H1 (cell line): ENCODE measurements at regions of chr6 and their contacts with region 1.

Region 1: GRCh38 chr6:37137201-37138090 is 32.5 kb upstream of the PIM1 start:
- DNase-seq: peak; percentile 77 to 93
- H3K4me3 ChIP-seq: peak overlapping the region; percentile 49 to 90 (median 87)
- H3K27ac ChIP-seq: peak overlapping the region; percentile 98
- H3K4me1 ChIP-seq: peaks cover 15 to 37% (median 28%) of the 10 kb centered on the region in 4 experiments
- H3K27me3 ChIP-seq: no peaks in the 10 kb centered on the region
- CTCF ChIP-seq: no peak
- EP300 ChIP-seq: peak; percentile 29 to 86; a peak in 2 of 3 replicates
- POLR2A ChIP-seq: peak in 1 of 2 experiments; percentile 95; a peak in 2 of 3 replicates
- RAD21 ChIP-seq: peak; percentile 18 to 28; a peak in 2 of 4 replicates

Region 2: DNA sequence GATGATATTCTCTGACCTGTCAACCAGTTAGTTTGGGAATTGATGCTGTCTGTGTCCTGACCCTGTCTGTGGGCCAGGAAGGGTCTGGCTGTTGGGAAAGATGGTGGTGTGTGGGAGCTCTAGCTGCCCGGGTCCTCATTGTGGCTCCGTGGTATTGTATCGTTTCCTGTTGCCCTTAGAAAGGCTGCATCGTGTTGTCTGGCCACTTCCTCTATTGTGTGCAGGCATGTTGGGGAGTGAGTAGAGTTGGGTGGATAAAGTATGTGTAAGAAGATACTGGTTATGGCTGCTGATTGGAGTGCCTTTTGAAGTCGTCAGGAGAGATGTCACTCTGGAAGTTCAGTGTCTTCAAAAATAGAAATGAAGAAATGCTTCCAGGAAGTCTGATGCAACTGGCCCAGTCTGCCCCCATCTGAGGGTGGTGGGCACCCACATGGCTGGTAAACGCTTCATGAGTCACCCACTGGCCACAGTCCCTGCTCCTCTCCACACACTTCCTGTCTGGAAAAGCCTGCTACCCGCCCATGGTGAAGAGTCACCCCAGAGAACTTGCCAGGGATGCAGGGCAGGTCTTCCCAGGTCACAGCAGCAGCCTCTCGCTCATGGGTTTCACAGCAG is 1767.2 kb before region 1 on chr6:
- CTCF ChIA-PET with region 1: no interaction called
- POLR2A ChIA-PET with region 1: no interaction called
- DNase-seq: no peak
- H3K4me3 ChIP-seq: no peak overlapping the region
- H3K27ac ChIP-seq: no peak overlapping the region
- H3K4me1 ChIP-seq: no peaks in the 10 kb centered on the region; a peak in 1 of 7 replicates
- H3K27me3 ChIP-seq: no peaks in the 10 kb centered on the region
- CTCF ChIP-seq: no peak
- EP300 ChIP-seq: no peak
- POLR2A ChIP-seq: no peak
- RAD21 ChIP-seq: no peak

Region 3: DNA sequence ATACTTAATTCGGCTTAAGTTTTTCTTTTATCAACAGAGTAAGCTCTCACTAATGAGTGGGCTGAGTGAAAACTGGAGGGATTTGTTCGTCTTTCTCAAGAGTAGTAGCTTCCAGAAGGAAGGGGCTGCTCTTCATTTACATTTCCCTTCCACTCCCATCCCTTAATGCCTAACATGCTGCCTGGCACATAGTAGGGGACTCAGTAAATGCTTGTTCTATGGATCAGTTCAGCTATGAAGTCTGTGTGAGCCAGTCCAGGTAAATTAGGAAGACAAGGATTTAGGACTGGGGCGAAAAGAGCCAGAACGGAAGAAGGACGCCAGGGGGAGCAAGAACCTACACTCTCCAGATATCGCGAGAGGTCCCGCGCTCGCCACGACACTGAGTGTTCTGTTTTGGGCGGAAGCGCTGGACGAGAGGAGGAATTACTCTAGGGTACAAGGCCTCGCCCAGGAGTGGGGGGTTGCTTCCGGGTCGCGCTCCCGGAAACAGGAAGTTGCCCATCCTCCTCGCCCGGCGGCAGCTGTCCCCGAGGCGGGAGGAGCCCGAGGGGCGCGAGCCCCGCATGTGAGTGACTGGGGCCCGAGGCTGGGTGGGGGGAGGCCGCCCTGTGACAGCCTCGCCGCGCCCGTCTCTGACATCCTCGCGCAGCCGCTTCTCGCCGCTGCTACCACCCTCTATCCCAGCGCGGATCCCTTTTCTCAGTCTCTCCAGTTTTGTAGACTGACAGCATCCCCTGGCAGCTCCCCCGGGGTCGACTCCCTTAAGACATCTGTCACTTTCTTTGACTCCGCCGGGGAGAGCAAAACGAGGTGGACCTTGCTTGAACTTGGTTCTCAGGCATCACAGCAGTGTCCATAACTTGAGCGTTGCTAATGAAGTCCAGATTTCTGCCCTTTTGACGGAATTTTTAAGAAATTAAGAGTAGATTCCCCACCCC is 251.7 kb before region 1 on chr6 and contains the start of gene C6orf89:
- CTCF ChIA-PET with region 1: no interaction called
- POLR2A ChIA-PET with region 1: no interaction called
- DNase-seq: peak; percentile 95 to 97
- H3K4me3 ChIP-seq: peak within 1 kb of the TSS; percentile 47 to 81 (median 70)
- H3K27ac ChIP-seq: peak within 1 kb of the TSS; percentile 24; the same call in 1 of the 2 replicates
- H3K4me1 ChIP-seq: no peaks in the 10 kb centered on the region; a peak in 1 of 7 replicates
- H3K27me3 ChIP-seq: no peaks in the 10 kb centered on the region
- CTCF ChIP-seq: peak; percentile 72 to 87 (median 82)
- EP300 ChIP-seq: 0 out of 3 replicates have a peak, but pooled peaks of 1 of the 2 experiments have one; percentile 10
- POLR2A ChIP-seq: no peak
- RAD21 ChIP-seq: peak; percentile 32 to 47; a peak in 3 of 4 replicates
- total RNA-seq, gene C6orf89: 11.6 and 12.3 TPM in 2 replicates

Region 4: GRCh38 chr6:37059344-37060206 is 77.9 kb before region 1 on chr6:
- CTCF ChIA-PET with region 1: interaction called, 7 read pairs
- POLR2A ChIA-PET with region 1: interaction called, 36 read pairs
- DNase-seq: peak in 1 of 2 experiments; percentile 82
- H3K4me3 ChIP-seq: peak overlapping the region in 3 of 4 experiments; percentile 20 to 46 (median 24); a peak in 4 of 8 replicates
- H3K27ac ChIP-seq: peak overlapping the region; percentile 94
- H3K4me1 ChIP-seq: peaks cover 4 to 31% (median 22%) of the 10 kb centered on the region in 4 experiments
- H3K27me3 ChIP-seq: no peaks in the 10 kb centered on the region
- CTCF ChIP-seq: peak in 2 of 3 experiments; percentile 73 to 82; a peak in 3 of 4 replicates
- EP300 ChIP-seq: peak in 1 of 2 experiments; percentile 19; a peak in 1 of 3 replicates
- POLR2A ChIP-seq: peak in 1 of 2 experiments; percentile 78; a peak in 2 of 3 replicates
- RAD21 ChIP-seq: peak; percentile 82 to 83

Region 5: DNA sequence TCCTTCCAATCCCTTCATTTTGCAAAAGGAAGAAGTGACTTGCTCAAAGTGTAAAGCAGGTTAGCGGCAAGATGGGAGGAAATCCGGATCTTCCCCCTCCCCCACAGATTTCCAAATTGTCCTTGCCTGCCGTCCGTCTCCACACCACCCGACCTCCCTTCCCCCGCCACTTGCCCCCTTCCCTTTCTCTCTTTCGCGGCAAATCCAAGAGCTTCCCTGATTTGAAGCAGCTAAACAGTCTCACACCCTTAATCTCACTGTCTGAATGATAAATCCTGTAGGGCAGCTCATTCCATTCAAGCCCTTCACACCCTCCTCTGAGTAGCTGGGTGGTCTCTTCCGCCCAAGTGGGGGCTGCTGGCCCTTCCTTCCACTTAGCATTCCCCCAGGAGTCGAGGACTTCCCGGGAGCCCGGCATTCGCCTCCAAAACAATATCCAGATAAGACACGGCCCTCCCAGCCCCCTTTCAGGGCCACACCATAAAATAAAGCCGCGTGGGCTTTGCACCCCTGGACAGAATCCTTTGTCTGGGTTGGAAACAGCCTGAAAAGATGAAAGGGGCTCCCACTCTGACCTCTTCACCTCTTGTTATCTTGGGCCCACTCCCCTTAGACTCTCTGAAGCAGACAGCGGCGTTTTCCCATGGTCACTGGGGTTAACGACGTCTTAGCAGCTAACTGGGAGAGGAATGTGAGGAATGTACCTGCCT is 11.5 kb before region 1 on chr6:
- CTCF ChIA-PET with region 1: interaction called, 15 read pairs
- POLR2A ChIA-PET with region 1: interaction called, 496 read pairs
- DNase-seq: peak; percentile 74 to 81
- H3K4me3 ChIP-seq: peak overlapping the region; percentile 12 to 58 (median 39); a peak in 7 of 8 replicates
- H3K27ac ChIP-seq: peak overlapping the region; percentile 94
- H3K4me1 ChIP-seq: peaks cover 19 to 42% (median 31%) of the 10 kb centered on the region in 4 experiments
- H3K27me3 ChIP-seq: no peaks in the 10 kb centered on the region
- CTCF ChIP-seq: no peak
- EP300 ChIP-seq: peak in 1 of 2 experiments; percentile 26; a peak in 1 of 3 replicates
- POLR2A ChIP-seq: peak in 1 of 2 experiments; percentile 53; a peak in 2 of 3 replicates
- RAD21 ChIP-seq: peak in 1 of 2 experiments; percentile 0; a peak in 1 of 4 replicates

Region 6: GRCh38 chr6:37149745-37150144 is 12.3 kb after region 1 on chr6:
- CTCF ChIA-PET with region 1: interaction called, 4 read pairs
- POLR2A ChIA-PET with region 1: interaction called, 11 read pairs
- DNase-seq: no peak
- H3K4me3 ChIP-seq: no peak overlapping the region
- H3K27ac ChIP-seq: no peak overlapping the region
- H3K4me1 ChIP-seq: peaks cover 0 to under 1% (median 0%) of the 10 kb centered on the region in 4 experiments; a peak in 2 of 7 replicates
- H3K27me3 ChIP-seq: no peaks in the 10 kb centered on the region
- CTCF ChIP-seq: no peak
- EP300 ChIP-seq: no peak
- POLR2A ChIP-seq: no peak
- RAD21 ChIP-seq: no peak